ENCODE measurements at regions of chr1 and their contacts with region 1.

Region 1: DNA sequence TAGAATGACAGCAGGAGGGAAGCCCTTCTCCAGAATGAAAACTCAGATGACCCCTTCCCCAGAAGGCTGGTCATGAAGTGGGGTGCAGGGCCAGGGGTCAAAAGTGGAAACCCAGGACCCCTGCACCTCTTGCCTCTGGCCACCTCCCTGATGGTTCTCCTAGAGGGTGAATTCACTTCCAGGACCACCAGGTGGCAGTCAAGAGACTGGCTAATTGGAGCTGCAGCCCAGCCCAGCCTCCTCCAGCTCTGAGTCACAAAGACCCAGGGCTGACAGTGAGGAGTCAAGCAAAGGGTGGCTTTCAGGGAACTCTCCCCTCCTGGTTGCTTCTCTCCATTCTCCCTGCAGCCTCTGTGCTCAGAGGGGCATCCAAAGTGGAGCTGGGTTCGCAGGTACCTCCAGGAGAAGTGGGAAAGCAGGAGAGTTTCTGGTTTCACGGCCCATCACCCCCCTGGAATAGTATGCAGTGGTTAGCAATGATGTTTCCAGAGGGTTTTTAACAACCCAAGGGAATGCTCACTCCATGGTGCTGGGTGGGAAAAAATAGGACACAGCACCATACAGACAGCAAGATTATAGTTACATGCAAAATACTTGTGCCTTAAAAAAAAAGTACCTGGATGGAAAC is 6.1 kb upstream of the EPHB2 start:
- DNase-seq: peak; percentile 84

Region 2: DNA sequence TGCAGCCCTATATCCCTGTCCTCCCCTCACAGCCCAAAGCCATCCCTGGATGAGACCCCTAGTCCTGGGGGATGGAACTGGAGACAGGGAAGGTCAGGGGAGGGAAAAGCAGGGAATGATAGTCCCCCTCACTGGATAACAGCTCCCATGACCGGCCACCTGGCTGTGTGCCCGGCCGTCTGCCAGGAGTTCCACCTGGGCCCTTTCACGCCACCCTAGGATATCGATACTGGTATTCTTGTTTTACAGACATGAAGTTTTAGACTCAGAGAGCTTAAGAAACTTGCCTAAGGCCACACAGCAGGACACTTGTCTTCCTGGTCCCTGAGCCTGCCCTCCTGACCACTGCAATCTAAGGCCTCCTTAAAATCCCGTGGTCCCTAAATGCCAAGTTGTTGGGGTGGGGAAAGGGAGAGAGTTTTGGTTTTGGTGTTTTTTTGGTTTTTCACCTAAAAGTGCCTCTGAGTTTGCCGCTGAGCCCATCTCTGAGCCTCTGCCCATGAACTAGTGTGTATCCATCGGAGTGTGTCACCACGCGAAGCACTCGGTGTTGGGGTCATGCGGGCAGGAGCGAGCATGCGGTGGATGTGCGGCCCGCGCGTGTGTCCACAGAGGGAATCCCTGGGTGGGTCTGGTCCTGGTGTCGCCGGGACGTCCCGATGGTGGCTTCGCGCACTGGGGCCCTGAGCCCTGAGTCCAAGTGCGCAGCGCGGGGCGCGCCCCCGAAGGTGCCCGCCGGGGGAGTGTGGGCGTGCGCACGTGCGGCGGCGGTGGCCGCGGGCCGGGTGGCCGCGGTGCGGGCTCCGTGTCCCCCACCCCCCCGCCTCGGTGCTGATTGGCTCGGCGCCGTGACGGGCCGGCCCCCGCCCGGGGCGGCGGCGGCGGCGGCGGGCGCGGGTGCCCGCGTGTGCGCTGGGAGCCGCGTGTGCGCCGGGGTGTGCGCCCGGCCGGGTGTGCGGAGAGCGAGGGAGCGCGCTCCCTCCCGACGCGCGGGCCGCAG is 141.7 kb before region 1 on chr1 and contains the start of gene EPHA8:
- CTCF ChIA-PET with region 1: no interaction called
- POLR2A ChIA-PET with region 1: no interaction called
- DNase-seq: peak; percentile 57

Region 3: GRCh38 chr1:22636353-22636752 is 68.2 kb before region 1 on chr1 and contains the start of gene C1QA:
- CTCF ChIA-PET with region 1: no interaction called
- POLR2A ChIA-PET with region 1: no interaction called
- DNase-seq: no peak

Region 4: GRCh38 chr1:22691031-22691753 is 13.4 kb before region 1 on chr1:
- CTCF ChIA-PET with region 1: interaction called, 22 read pairs
- POLR2A ChIA-PET with region 1: no interaction called
- DNase-seq: no peak

Region 5: DNA sequence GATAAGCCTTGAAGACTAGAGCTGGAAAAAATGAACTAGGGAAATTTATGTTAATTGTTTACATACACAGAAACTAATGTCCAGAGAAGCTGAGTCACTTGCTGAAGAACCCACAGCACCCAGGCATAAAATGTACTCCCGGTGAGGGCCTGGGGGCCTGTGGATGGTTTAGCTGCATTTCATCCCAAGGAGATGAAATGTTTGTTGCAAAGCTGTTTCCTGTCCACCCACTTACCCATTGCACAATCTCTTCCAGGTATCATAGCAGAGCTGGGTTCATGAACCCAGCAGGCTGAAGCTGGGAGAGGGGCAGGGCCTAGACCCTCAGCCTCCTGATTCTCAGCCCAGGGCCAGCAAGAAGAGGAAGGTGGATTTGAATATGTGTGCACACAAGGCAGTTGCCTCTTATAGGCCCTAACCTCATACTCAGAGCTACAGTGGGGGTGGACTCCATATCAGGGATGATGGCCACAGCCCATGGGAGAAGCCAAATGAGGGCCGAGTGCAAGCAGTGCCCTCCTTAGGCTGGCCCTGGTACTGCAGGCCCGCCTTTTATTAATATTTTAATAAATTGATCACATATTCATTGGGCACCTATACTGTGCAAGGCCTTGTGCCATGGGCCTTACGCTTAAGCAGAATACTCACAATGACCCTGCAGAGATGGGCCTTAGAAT is 157.3 kb after region 1 on chr1:
- CTCF ChIA-PET with region 1: interaction called, 22 read pairs
- POLR2A ChIA-PET with region 1: no interaction called
- DNase-seq: peak; percentile 70

Region 6: DNA sequence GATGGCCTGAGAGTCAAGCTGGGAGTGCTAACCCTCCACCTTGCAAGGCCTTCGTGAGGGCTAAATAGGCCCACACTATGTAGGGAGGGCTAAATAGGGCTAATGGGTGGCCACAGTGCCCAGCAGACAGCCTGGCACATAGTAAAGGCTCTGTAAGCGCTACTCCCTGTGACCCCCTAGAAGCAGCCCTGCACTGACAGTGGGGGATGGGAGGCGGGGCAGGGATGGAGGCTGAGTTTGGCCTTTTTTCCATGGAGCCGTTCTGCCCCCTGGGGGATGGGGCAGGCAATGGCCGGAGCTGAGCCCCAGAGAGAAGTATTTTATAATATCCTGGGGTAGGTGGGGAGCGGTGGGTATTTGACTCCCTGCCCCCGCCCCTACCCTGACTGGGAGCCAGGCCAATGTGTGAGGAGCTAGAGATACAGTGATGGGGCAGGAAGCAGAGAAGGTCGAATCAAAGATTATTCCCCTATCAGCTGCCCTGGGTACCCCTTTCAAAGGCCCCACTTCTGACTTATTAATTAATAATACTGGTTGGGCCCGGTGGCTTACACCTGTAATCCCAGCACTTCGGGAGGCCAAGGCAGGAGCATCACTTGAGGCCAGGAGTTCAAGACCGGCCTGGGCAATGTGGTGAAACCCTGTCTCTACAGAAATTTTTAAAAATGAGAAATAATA is 225.8 kb after region 1 on chr1:
- CTCF ChIA-PET with region 1: interaction called, 11 read pairs
- POLR2A ChIA-PET with region 1: no interaction called
- DNase-seq: peak; percentile 86